ENCODE measurements at regions of chr6 and their contacts with region 1.

Region 1: DNA sequence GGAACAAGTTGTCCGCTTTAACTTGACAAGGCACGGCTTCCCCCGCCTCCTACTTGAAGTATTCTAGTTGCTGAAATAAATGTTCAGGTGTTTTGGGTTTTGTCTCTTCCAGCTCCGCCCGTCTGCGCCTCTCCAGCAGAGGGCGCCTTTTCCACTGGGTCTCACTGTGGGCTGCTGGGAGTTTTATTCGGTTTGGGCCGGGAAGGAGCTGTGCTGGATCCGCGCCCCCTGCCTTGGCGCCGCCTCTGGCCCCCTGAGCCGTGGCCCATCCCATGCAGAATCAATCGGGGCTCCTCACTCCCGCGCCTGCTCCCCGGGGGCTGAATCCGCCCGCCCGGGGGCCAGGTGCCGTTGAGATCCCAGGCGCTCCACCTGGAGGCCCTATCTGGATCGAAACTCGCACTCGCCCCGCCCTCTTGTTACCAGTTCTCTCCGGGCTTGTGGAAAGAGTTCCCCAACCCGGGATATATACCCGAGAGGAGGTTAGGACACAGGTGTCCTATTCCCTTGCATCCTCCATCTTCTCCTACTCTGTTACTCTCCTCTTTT is 51.0 kb upstream of the TCF21 start:
- DNase-seq: peak; percentile 68
- ATAC-seq: peak; percentile 95
- H3K4me3 ChIP-seq: peak overlapping the region; percentile 40 to 59
- H3K27ac ChIP-seq: peak overlapping the region; percentile 60
- H3K4me1 ChIP-seq: peaks cover 0 to 10% of the 10 kb centered on the region in 2 experiments; a peak in 2 of 4 replicates
- H3K27me3 ChIP-seq: no peaks in the 10 kb centered on the region
- CTCF ChIP-seq: peak; percentile 95 to 97 (median 97)
- POLR2A ChIP-seq: no peak
- RAD21 ChIP-seq: peak; percentile 71

Region 2: DNA sequence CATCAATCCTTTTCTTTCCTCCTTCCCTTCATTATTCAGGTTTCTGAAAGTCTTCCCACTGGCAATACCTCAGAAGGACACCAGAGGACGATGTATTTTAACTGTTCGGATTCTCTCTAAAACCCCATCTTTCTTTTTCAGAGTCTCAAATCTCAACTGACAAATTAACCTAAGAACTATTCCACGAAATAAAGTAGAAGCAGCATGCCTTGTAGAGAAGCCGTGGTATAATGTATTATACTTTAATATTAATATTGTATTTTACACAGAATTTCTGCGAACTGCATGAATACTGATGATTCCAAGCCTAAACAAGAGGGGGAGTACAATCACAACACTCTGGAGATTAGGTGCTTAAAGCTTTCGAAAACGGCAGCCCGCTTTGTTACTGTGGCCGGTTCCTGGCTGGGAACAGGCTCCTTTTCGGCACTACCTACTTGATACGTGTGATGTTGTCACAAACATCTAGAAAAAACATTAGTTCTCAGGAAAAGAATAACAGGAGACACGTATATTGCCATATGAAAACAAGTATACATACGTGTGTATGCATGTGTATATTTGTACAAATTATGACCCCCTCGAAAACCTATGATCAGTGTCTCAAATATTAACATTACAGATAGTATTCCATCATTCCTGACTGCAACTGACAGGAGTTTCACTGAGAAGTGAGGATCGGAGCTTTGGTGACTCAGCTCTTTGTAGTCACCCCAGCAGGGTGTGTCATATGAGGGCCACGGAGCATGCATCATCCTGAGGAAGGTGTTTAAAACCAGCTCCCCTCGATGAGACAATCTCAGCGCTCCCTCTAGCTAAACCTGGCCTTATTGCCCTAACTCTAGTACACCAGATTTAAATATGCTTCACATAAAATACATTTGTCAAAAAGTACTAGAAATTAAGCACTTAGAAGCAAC is 268.6 kb before region 1 on chr6:
- CTCF ChIA-PET with region 1: interaction called, 20 read pairs
- POLR2A ChIA-PET with region 1: interaction called, 3 read pairs
- RAD21 ChIA-PET with region 1: interaction called in 1 of 2 experiments, 7 read pairs
- intact Hi-C with region 1: loop called (anchors 2 kb)
- DNase-seq: peak; percentile 87
- ATAC-seq: peak; percentile 97
- H3K4me3 ChIP-seq: peak overlapping the region; percentile 41 to 55
- H3K27ac ChIP-seq: peak overlapping the region; percentile 76
- H3K4me1 ChIP-seq: peaks cover 4 to 14% of the 10 kb centered on the region in 2 experiments
- H3K27me3 ChIP-seq: no peaks in the 10 kb centered on the region
- CTCF ChIP-seq: peak; percentile 90 to 98 (median 94)
- POLR2A ChIP-seq: no peak
- RAD21 ChIP-seq: peak; percentile 87

Region 3: DNA sequence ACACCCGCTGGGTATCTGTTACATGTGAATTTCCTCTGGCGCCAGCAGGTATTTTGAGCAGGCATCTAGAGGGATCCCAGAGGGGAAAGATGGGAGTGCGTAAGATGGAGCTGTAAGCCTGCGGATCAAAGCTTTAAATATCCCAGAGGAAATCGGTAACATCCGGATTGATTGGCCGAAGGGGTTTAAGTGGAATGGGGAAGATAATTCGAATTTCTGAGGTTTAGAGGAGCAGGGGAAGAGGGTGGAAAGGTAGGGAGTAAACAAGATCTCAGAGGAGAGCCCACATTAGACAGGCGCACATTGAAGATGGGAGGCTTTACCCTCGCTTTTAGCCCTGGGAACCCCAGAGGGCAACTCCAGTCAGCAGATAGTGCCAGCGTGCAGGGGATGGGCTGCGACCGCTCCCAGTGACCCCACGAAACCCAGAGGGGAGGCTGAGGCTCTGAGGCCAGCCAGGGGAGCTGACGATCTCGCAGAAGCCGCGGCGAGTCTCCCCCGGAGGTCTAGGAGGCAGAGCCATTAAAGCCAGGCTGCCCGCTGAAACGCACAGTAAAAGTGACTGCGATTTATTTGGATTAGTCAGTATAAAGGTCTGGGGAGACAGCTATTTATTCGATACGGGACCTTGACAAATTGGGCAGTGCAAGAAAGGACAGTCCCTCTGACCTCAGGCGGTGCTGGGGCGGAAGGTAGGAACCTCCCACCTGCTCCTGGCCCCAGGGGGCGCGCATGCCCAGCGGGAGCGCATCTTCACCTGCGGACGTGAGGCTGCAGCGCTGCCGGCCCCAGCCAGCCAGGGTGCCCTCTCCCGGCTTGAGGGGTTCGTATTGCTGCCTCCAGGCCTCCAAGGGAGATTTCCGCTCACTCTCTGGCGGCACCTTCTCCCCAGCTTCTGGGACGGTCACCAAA is 16.7 kb after region 1 on chr6:
- CTCF ChIA-PET with region 1: interaction called, 12 read pairs
- POLR2A ChIA-PET with region 1: no interaction called
- RAD21 ChIA-PET with region 1: no interaction called
- intact Hi-C with region 1: no loop called
- DNase-seq: no peak
- ATAC-seq: no peak
- H3K4me3 ChIP-seq: no peak overlapping the region
- H3K27ac ChIP-seq: no peak overlapping the region
- H3K4me1 ChIP-seq: no peaks in the 10 kb centered on the region
- H3K27me3 ChIP-seq: no peaks in the 10 kb centered on the region
- CTCF ChIP-seq: no peak
- POLR2A ChIP-seq: no peak
- RAD21 ChIP-seq: no peak

Region 4: GRCh38 chr6:133916650-133917151 is 78.8 kb after region 1 on chr6:
- CTCF ChIA-PET with region 1: interaction called, 53 read pairs
- POLR2A ChIA-PET with region 1: interaction called, 4 read pairs
- RAD21 ChIA-PET with region 1: interaction called, 9 to 11 read pairs
- intact Hi-C with region 1: loop called (anchors 1 kb)
- DNase-seq: peak; percentile 85
- ATAC-seq: peak; percentile 89
- H3K4me3 ChIP-seq: peak overlapping the region in 1 of 2 experiments; percentile 31; a peak in 1 of 4 replicates
- H3K27ac ChIP-seq: peak overlapping the region; percentile 41; the same call in 1 of the 2 replicates
- H3K4me1 ChIP-seq: peaks cover 8 to 12% of the 10 kb centered on the region in 2 experiments
- H3K27me3 ChIP-seq: no peaks in the 10 kb centered on the region
- CTCF ChIP-seq: peak; percentile 94 to 96 (median 96)
- POLR2A ChIP-seq: no peak
- RAD21 ChIP-seq: peak; percentile 97

Region 5: GRCh38 chr6:133923938-133924593 is 86.2 kb after region 1 on chr6:
- CTCF ChIA-PET with region 1: interaction called, 11 read pairs
- POLR2A ChIA-PET with region 1: no interaction called
- RAD21 ChIA-PET with region 1: no interaction called
- intact Hi-C with region 1: no loop called
- DNase-seq: peak; percentile 78
- ATAC-seq: peak; percentile 92
- H3K4me3 ChIP-seq: no peak overlapping the region
- H3K27ac ChIP-seq: no peak overlapping the region
- H3K4me1 ChIP-seq: peaks cover 3 to 5% of the 10 kb centered on the region in 2 experiments; a peak in 1 of 4 replicates
- H3K27me3 ChIP-seq: no peaks in the 10 kb centered on the region
- CTCF ChIP-seq: peak; percentile 69 to 92 (median 88)
- POLR2A ChIP-seq: no peak
- RAD21 ChIP-seq: peak; percentile 98